ENCODE measurements at regions of chr16 and their contacts with region 1.

Region 1: DNA sequence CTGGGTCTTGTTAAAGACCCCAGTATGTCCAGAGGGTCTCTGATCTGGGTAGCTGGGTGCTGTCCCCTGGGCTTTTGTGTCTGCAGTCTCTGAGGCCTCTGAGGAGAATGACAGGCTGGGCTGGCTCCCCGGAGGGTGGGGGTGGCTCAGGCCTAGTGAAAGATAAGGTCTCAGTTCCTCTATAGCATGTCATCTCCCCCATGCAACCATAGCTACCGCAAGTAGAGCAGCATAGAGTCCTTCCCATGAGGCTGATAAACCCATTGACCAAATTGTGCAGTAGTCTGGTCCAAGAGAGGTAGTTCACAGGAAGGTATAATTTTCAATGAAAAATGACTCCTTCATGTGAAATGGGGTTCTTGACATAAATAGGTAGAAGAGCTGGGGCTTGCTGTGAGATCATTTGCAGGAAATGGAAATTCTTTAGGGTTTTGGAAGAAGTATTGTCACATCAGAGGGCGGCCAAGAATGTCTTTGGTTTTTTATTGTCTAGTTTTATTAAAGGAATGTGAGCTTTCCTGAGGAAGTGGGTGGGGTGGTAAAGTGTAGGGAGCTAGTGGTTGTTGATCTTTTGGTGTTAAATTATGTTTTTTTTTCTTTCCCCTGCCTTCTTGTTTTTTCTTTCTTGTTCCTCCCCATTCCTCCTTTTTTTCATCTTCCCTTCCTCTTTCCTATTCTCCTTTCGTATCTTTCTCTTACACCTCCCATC is 21.0 kb downstream of the SLC7A6OS start:
- DNase-seq: peak; percentile 83
- ATAC-seq: peak; percentile 83
- H3K4me3 ChIP-seq: peak overlapping the region in 1 of 5 experiments; percentile 4
- H3K4me3 Mint-ChIP-seq: peak overlapping the region; percentile 58
- H3K27ac ChIP-seq: peak overlapping the region; percentile 62 to 92
- H3K27ac Mint-ChIP-seq: peak overlapping the region; percentile 93
- H3K4me1 ChIP-seq: peaks cover 55 to 75% of the 10 kb centered on the region in 2 donors
- H3K4me1 Mint-ChIP-seq: peaks cover 61% of the 10 kb centered on the region
- H3K27me3 ChIP-seq: no peaks in the 10 kb centered on the region
- H3K27me3 Mint-ChIP-seq: no peaks in the 10 kb centered on the region
- CTCF ChIP-seq: no peak

Region 2: DNA sequence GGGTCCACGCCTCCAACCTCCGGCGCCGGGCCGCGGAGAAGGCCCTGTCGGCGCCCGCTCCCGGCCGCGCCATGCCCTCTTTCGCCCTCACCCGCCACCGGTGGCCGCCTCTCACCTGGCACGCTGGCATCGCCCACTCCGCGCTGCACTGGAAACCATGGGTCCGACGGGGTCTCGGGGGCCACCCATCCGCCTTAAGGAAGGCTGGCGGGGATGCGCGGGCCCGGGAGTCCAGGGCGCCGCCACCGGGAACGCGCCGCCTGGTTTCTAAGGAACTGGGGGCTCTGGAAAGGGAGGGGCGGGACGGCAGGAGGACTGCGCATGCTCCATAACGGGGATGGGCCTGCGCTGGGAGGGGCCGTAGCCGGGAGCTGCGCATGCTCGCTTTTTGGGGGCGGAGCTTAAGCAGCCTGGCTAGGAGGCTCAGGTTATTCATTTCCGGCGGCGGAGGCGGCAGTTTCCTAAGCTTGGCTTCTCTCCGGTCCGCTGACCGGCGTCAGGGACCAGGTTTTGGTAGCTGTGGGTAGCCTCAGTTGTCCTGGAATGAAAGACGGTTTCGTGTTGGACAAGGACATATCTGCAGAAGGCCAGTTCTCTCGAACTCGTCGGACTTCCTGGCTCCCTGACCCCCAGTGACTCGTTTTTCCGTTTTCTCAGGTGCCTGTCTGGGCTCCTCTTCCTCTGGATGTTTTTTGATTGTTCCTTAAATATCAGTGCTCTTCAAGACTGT is 570.6 kb before region 1 on chr16 and contains the start of gene GFOD2:
- CTCF ChIA-PET with region 1: no interaction called
- POLR2A ChIA-PET with region 1: interaction called, 11 read pairs
- intact Hi-C with region 1: no loop called
- DNase-seq: peak; percentile 97
- ATAC-seq: peak; percentile 94
- H3K4me3 ChIP-seq: peak within 1 kb of the TSS; percentile 66 to 93 (median 87)
- H3K4me3 Mint-ChIP-seq: peak within 1 kb of the TSS; percentile 99
- H3K27ac ChIP-seq: peak within 1 kb of the TSS; percentile 89 to 93
- H3K27ac Mint-ChIP-seq: peak within 1 kb of the TSS; percentile 98
- H3K4me1 ChIP-seq: peaks cover 18 to 20% of the 10 kb centered on the region in 2 donors
- H3K4me1 Mint-ChIP-seq: peaks cover 38% of the 10 kb centered on the region
- H3K27me3 ChIP-seq: no peaks in the 10 kb centered on the region
- H3K27me3 Mint-ChIP-seq: no peaks in the 10 kb centered on the region
- CTCF ChIP-seq: no peak
- total RNA-seq, gene GFOD2: 18.1 and 18.2 TPM in 2 replicates

Region 3: GRCh38 chr16:67999985-68000384 is 289.8 kb before region 1 on chr16:
- CTCF ChIA-PET with region 1: no interaction called
- POLR2A ChIA-PET with region 1: no interaction called
- intact Hi-C with region 1: loop called (anchors 2 kb)
- DNase-seq: peak; percentile 60
- ATAC-seq: peak; percentile 19
- H3K4me3 ChIP-seq: peak overlapping the region in 4 of 5 experiments; percentile 21 to 85 (median 58)
- H3K4me3 Mint-ChIP-seq: peak overlapping the region; percentile 91
- H3K27ac ChIP-seq: peak overlapping the region; percentile 73 to 76
- H3K27ac Mint-ChIP-seq: peak overlapping the region; percentile 94
- H3K4me1 ChIP-seq: peaks cover 57 to 72% of the 10 kb centered on the region in 2 donors
- H3K4me1 Mint-ChIP-seq: peaks cover 66% of the 10 kb centered on the region
- H3K27me3 ChIP-seq: no peaks in the 10 kb centered on the region
- H3K27me3 Mint-ChIP-seq: no peaks in the 10 kb centered on the region
- CTCF ChIP-seq: no peak

Region 4: DNA sequence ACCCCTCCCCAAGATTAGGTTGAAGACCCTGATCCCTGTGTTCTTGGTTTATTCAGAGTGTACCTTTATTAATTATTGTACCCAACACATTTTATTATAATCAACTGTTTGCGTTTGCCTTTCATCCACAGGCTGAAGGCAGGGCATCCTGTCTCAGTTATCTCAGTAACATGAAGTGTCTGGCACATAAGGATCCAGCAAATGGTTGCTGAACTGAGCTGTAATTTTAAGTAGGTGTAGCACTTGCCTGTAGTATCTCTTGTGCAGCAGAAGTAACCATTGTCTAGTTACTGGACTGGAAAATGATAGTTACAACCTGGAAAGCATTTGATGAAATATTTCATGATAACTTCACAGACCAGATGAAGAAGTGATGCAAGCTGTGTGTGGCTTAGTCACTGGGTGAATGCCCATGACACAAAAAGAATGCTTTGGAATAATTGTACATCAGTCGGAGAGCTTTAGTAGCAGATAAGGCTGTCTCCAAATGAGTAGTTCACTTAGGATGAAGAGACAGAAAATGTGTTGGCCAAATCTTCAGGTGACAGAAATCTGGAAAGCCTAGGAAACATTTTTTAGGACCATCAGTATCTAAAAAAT is 110.5 kb before region 1 on chr16:
- CTCF ChIA-PET with region 1: no interaction called
- POLR2A ChIA-PET with region 1: no interaction called
- intact Hi-C with region 1: no loop called
- DNase-seq: no peak
- ATAC-seq: no peak
- H3K4me3 ChIP-seq: no peak overlapping the region
- H3K4me3 Mint-ChIP-seq: no peak overlapping the region
- H3K27ac ChIP-seq: no peak overlapping the region
- H3K27ac Mint-ChIP-seq: no peak overlapping the region
- H3K4me1 ChIP-seq: no peaks in the 10 kb centered on the region
- H3K4me1 Mint-ChIP-seq: no peaks in the 10 kb centered on the region
- H3K27me3 ChIP-seq: no peaks in the 10 kb centered on the region
- H3K27me3 Mint-ChIP-seq: no peaks in the 10 kb centered on the region
- CTCF ChIP-seq: no peak

Region 5: GRCh38 chr16:68244903-68245853 is 44.6 kb before region 1 on chr16 and contains the start of gene PLA2G15:
- CTCF ChIA-PET with region 1: no interaction called
- POLR2A ChIA-PET with region 1: no interaction called
- intact Hi-C with region 1: loop called (anchors 5 kb)
- DNase-seq: peak; percentile 97
- ATAC-seq: peak; percentile 98
- H3K4me3 ChIP-seq: peak within 1 kb of the TSS; percentile 78 to 97 (median 96)
- H3K4me3 Mint-ChIP-seq: peak within 1 kb of the TSS; percentile 97
- H3K27ac ChIP-seq: peak within 1 kb of the TSS; percentile 12 to 28
- H3K27ac Mint-ChIP-seq: peak within 1 kb of the TSS; percentile 50
- H3K4me1 ChIP-seq: peaks cover 25 to 33% of the 10 kb centered on the region in 2 donors
- H3K4me1 Mint-ChIP-seq: peaks cover 32% of the 10 kb centered on the region
- H3K27me3 ChIP-seq: no peaks in the 10 kb centered on the region
- H3K27me3 Mint-ChIP-seq: no peaks in the 10 kb centered on the region
- CTCF ChIP-seq: no peak
- total RNA-seq, gene PLA2G15: 10.8 and 12.5 TPM in 2 replicates

Region 6: GRCh38 chr16:68275611-68276191 is 14.1 kb before region 1 on chr16:
- CTCF ChIA-PET with region 1: interaction called, 8 read pairs
- POLR2A ChIA-PET with region 1: interaction called, 6 read pairs
- intact Hi-C with region 1: loop called (anchors 1 kb)
- DNase-seq: peak; percentile 65
- ATAC-seq: peak; percentile 67
- H3K4me3 ChIP-seq: peak overlapping the region in 2 of 5 experiments; percentile 24 to 40
- H3K4me3 Mint-ChIP-seq: peak overlapping the region; percentile 64
- H3K27ac ChIP-seq: peak overlapping the region; percentile 46 to 79
- H3K27ac Mint-ChIP-seq: peak overlapping the region; percentile 94
- H3K4me1 ChIP-seq: peaks cover 43 to 61% of the 10 kb centered on the region in 2 donors
- H3K4me1 Mint-ChIP-seq: peaks cover 55% of the 10 kb centered on the region
- H3K27me3 ChIP-seq: no peaks in the 10 kb centered on the region
- H3K27me3 Mint-ChIP-seq: no peaks in the 10 kb centered on the region
- CTCF ChIP-seq: no peak

Region 7: GRCh38 chr16:68310761-68311511 is 21.2 kb after region 1 on chr16 and contains the starts of genes PRMT7 and SLC7A6OS:
- CTCF ChIA-PET with region 1: interaction called, 15 read pairs
- POLR2A ChIA-PET with region 1: interaction called, 11 read pairs
- intact Hi-C with region 1: loop called (anchors 1 kb)
- DNase-seq: peak; percentile 94
- ATAC-seq: peak; percentile 99
- H3K4me3 ChIP-seq: peak within 1 kb of the TSS; percentile 76 to 96 (median 94)
- H3K4me3 Mint-ChIP-seq: peak within 1 kb of the TSS; percentile 98
- H3K27ac ChIP-seq: peak within 1 kb of the TSS; percentile 59 to 76
- H3K27ac Mint-ChIP-seq: peak within 1 kb of the TSS; percentile 96
- H3K4me1 ChIP-seq: peaks cover 20 to 24% of the 10 kb centered on the region in 2 donors
- H3K4me1 Mint-ChIP-seq: peaks cover 37% of the 10 kb centered on the region
- H3K27me3 ChIP-seq: no peaks in the 10 kb centered on the region
- H3K27me3 Mint-ChIP-seq: no peaks in the 10 kb centered on the region
- CTCF ChIP-seq: peak; percentile 36
- total RNA-seq, gene PRMT7: 76.9 and 79.0 TPM in 2 replicates
- total RNA-seq, gene SLC7A6OS: 52.0 and 54.1 TPM in 2 replicates

Region 8: DNA sequence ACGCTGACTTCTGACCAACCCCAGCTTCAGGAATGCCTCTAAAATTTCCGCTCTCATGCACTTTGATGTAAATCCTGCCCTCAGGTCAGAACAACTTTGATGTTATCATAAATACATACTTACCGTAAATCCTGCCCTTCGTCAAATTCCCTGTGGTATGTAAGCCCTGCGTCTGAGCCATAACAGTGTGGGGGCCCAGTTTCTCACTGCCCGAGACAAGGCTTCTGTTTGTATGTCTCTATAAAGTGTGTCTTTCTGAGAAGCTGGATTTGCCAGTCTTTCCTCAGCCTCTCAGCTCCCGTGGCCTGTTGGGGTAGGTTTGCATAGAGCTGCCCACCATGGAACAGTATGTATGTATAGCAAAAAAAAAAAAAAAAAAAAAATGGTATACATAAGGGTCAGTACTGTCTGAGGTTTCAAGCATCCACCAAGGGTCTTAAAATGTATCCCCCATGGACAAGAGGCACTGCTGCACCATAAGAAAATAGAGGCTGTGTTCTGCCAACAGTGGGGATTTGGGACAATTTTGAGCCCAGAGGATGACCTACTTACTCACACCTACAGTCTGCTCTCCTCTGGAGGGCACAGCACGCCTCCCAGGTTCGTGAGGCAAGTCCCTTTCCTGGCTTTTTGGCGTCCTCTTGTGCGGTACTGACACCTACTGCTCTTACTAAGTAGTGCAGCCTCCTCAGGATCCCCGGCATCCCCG is 38.5 kb after region 1 on chr16:
- CTCF ChIA-PET with region 1: interaction called, 44 read pairs
- POLR2A ChIA-PET with region 1: interaction called, 3 read pairs
- intact Hi-C with region 1: loop called (anchors 2 kb)
- DNase-seq: peak; percentile 86
- ATAC-seq: peak; percentile 99
- H3K4me3 ChIP-seq: no peak overlapping the region
- H3K4me3 Mint-ChIP-seq: no peak overlapping the region
- H3K27ac ChIP-seq: no peak overlapping the region
- H3K27ac Mint-ChIP-seq: no peak overlapping the region
- H3K4me1 ChIP-seq: peaks cover 11 to 16% of the 10 kb centered on the region in 2 donors
- H3K4me1 Mint-ChIP-seq: peaks cover 14% of the 10 kb centered on the region
- H3K27me3 ChIP-seq: no peaks in the 10 kb centered on the region
- H3K27me3 Mint-ChIP-seq: no peaks in the 10 kb centered on the region
- CTCF ChIP-seq: peak; percentile 96

Region 9: GRCh38 chr16:68499006-68499405 is 209.2 kb after region 1 on chr16:
- CTCF ChIA-PET with region 1: no interaction called
- POLR2A ChIA-PET with region 1: no interaction called
- intact Hi-C with region 1: no loop called
- DNase-seq: no peak
- ATAC-seq: no peak
- H3K4me3 ChIP-seq: no peak overlapping the region
- H3K4me3 Mint-ChIP-seq: no peak overlapping the region
- H3K27ac ChIP-seq: no peak overlapping the region
- H3K27ac Mint-ChIP-seq: no peak overlapping the region
- H3K4me1 ChIP-seq: no peaks in the 10 kb centered on the region
- H3K4me1 Mint-ChIP-seq: no peaks in the 10 kb centered on the region
- H3K27me3 ChIP-seq: no peaks in the 10 kb centered on the region
- H3K27me3 Mint-ChIP-seq: no peaks in the 10 kb centered on the region
- CTCF ChIP-seq: no peak